Breast epithelium (tissue), 4 donors: ENCODE measurements at regions of chr7 and their contacts with region 1.

Region 1: GRCh38 chr7:130069978-130070860 is at the start of gene KLHDC10:
- DNase-seq: peak; percentile 97 to 98
- H3K4me3 ChIP-seq: peak within 1 kb of the TSS; percentile 85 to 99 (median 97)
- H3K27ac ChIP-seq: peak within 1 kb of the TSS; percentile 93 to 95
- H3K4me1 ChIP-seq: peaks cover 7 to 15% of the 10 kb centered on the region in 2 donors
- H3K27me3 ChIP-seq: no peaks in the 10 kb centered on the region
- CTCF ChIP-seq: no peak
- POLR2A ChIP-seq: no peak
- total RNA-seq, gene KLHDC10: 23.3 to 28.0 (median 28.0) TPM

Region 2: GRCh38 chr7:131604841-131605279 is 1534.6 kb after region 1 on chr7:
- intact Hi-C with region 1: loop called (anchors 5 kb)
- DNase-seq: no peak
- H3K4me3 ChIP-seq: no peak overlapping the region
- H3K27ac ChIP-seq: no peak overlapping the region
- H3K4me1 ChIP-seq: no peaks in the 10 kb centered on the region
- H3K27me3 ChIP-seq: no peaks in the 10 kb centered on the region
- CTCF ChIP-seq: no peak
- POLR2A ChIP-seq: no peak